ENCODE measurements at regions of chr12 and their contacts with region 1.

Region 1: GRCh38 chr12:53159195-53159839 is 21.2 kb upstream of the ZNF740 start:
- DNase-seq: peak in 1 of 2 experiments; percentile 97
- H3K4me3 ChIP-seq: peak overlapping the region in 1 of 4 experiments; percentile 45; a peak in 3 of 8 replicates
- H3K27ac ChIP-seq: no peak overlapping the region
- H3K4me1 ChIP-seq: peaks cover 0 to 3% (median 1%) of the 10 kb centered on the region in 4 experiments; a peak in 2 of 7 replicates
- H3K27me3 ChIP-seq: peaks cover 0 to 13% (median 7%) of the 10 kb centered on the region in 4 experiments; a peak in 5 of 7 replicates
- CTCF ChIP-seq: peak; percentile 96 to 100 (median 100)
- EP300 ChIP-seq: no peak
- POLR2A ChIP-seq: no peak
- RAD21 ChIP-seq: peak; percentile 81 to 87

Region 2: GRCh38 chr12:53071591-53072551 is 87.4 kb before region 1 on chr12:
- CTCF ChIA-PET with region 1: interaction called, 78 read pairs
- POLR2A ChIA-PET with region 1: no interaction called
- DNase-seq: no peak
- H3K4me3 ChIP-seq: no peak overlapping the region
- H3K27ac ChIP-seq: no peak overlapping the region
- H3K4me1 ChIP-seq: peaks cover 4 to 16% (median 10%) of the 10 kb centered on the region in 4 experiments
- H3K27me3 ChIP-seq: peaks cover 0 to 2% (median under 1%) of the 10 kb centered on the region in 4 experiments; a peak in 2 of 7 replicates
- CTCF ChIP-seq: peak in 2 of 3 experiments; percentile 7 to 9; a peak in 1 of 4 replicates
- EP300 ChIP-seq: no peak
- POLR2A ChIP-seq: no peak
- RAD21 ChIP-seq: peak in 1 of 2 experiments; percentile 10; a peak in 1 of 4 replicates

Region 3: GRCh38 chr12:53129170-53129569 is 30.1 kb before region 1 on chr12:
- CTCF ChIA-PET with region 1: interaction called, 12 read pairs
- POLR2A ChIA-PET with region 1: no interaction called
- DNase-seq: no peak
- H3K4me3 ChIP-seq: no peak overlapping the region
- H3K27ac ChIP-seq: no peak overlapping the region
- H3K4me1 ChIP-seq: no peaks in the 10 kb centered on the region
- H3K27me3 ChIP-seq: no peaks in the 10 kb centered on the region
- CTCF ChIP-seq: no peak
- EP300 ChIP-seq: no peak
- POLR2A ChIP-seq: no peak
- RAD21 ChIP-seq: no peak

Region 4: DNA sequence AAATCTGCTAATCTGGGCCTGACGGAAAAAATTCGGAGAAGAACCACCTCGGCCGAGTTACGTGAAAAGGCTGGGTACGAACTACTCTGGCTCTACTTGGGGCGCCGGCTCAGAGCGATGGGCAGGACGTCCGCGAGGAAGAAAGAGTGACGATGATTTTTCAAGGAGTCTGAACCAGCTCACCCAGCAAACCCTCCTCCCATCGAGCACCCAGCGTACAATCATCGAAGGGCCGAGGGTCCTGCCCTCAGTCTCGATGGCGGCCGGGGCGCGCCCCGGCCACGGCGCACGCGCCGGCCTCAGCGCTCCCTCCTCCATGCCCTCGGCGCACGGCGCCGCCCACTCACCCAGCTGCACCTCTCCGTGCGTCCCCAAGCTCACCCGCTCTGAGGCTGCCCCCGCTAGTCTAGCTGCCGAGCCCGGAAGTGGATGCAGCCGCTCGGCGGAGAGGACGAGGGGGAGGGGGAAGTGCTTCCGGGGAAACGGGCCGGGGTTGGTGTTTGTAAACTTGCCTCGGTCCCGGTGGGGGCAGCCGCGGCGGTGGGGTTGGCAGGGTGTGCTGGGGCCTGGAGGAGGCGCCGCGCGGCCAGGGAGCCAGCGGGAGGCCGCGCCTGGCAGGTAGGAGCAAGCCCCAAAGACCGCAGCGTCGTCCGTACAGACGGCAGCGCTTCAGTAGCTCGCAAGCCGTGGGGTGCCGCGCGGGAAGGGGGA is 21.1 kb after region 1 on chr12 and contains the starts of genes CSAD and ZNF740:
- CTCF ChIA-PET with region 1: interaction called, 80 read pairs
- POLR2A ChIA-PET with region 1: interaction called, 18 read pairs
- DNase-seq: peak; percentile 94
- H3K4me3 ChIP-seq: peak within 1 kb of the TSS; percentile 71 to 89 (median 83)
- H3K27ac ChIP-seq: peak within 1 kb of the TSS; percentile 50; the same call in 1 of the 2 replicates
- H3K4me1 ChIP-seq: peaks cover 2 to 10% (median 4%) of the 10 kb centered on the region in 4 experiments; a peak in 6 of 7 replicates
- H3K27me3 ChIP-seq: peaks cover 7 to 35% (median 21%) of the 10 kb centered on the region in 4 experiments
- CTCF ChIP-seq: no peak
- EP300 ChIP-seq: peak in 1 of 2 experiments; percentile 56; a peak in 1 of 3 replicates
- POLR2A ChIP-seq: peak in 1 of 2 experiments; percentile 52; a peak in 1 of 3 replicates
- RAD21 ChIP-seq: no peak
- total RNA-seq, gene CSAD: 8.8 and 10.0 TPM in 2 replicates
- total RNA-seq, gene ZNF740: 35.6 and 40.0 TPM in 2 replicates

Region 5: DNA sequence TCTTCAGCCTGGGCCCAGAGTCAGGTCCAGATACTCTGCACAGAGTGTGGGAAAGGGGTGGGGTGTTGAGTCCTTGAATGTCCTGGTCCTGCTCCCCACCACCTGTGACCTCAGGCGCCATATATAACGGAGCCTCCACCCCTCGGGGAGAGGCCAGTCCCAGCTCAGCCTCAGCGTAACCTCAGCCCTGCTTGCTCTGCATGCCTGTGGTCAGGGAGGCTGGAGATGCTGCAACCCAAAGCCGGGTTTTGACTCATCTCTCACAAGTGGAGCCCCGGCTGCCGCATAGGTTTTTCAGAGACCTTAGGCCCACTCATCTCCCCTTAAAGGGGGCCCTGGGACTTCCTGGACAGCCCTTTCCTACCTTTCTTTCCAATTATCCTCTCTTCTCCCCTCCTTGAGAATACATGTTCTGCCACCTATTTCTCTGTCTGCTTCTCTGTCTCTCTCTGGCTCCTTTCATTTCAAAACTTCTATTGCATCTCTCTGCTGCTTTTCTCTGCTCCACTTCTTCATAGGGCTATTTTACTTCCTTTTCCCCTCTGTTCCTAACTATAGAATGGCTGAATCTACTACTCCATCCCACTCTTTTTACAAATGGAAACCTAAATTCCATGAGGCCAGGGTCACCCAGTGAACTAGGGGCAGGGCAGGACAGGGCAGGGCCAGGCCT is 46.6 kb after region 1 on chr12:
- CTCF ChIA-PET with region 1: interaction called, 48 read pairs
- POLR2A ChIA-PET with region 1: no interaction called
- DNase-seq: no peak
- H3K4me3 ChIP-seq: no peak overlapping the region
- H3K27ac ChIP-seq: no peak overlapping the region
- H3K4me1 ChIP-seq: peaks cover 0 to 2% (median 0%) of the 10 kb centered on the region in 4 experiments; a peak in 1 of 7 replicates
- H3K27me3 ChIP-seq: no peaks in the 10 kb centered on the region; a peak in 1 of 7 replicates
- CTCF ChIP-seq: no peak
- EP300 ChIP-seq: no peak
- POLR2A ChIP-seq: no peak
- RAD21 ChIP-seq: no peak

Region 6: DNA sequence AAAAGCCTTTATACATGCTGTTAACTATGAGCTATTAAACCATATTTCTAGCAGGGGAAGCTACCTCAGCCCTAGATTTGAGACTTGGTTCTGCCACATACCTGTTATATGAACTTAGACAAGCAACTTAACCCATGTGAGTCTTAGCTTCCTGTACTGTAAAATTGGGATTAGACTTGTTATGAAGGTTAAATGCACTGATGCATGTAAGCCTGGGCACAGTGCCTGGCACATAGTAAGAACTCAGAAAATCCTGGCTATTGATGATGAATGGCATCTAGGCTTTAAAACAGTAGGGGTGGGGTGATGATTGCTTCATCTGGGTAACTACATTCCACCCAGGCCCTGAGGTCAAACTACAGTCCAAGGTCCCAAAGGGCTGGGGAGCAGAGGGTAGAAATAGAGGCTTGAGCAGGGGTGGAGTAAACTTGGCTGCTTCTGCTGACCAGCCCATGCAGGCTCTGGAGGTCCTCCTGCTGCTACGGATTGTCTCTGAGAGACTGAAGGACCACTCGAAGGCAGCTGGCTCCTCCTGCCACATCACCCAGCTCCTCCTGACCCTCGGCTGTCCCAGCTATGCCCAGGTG is 120.1 kb after region 1 on chr12:
- CTCF ChIA-PET with region 1: interaction called, 11 read pairs
- POLR2A ChIA-PET with region 1: no interaction called
- DNase-seq: no peak
- H3K4me3 ChIP-seq: no peak overlapping the region
- H3K27ac ChIP-seq: no peak overlapping the region
- H3K4me1 ChIP-seq: no peaks in the 10 kb centered on the region
- H3K27me3 ChIP-seq: no peaks in the 10 kb centered on the region
- CTCF ChIP-seq: no peak
- EP300 ChIP-seq: no peak
- POLR2A ChIP-seq: no peak
- RAD21 ChIP-seq: no peak